Activated CD4-positive, alpha-beta T cell treated with anti-CD3 and anti-CD28 coated beads, Interleukin-2, amount 10 ng/mL, durations not matched to agents 24 days and 14 days (primary cell): ENCODE measurements at regions of chr17 and their contacts with region 1.

Region 1: GRCh38 chr17:67139784-67140657 is 95.7 kb downstream of the CACNG1 start:
- DNase-seq: no peak
- H3K4me3 Mint-ChIP-seq: no peak overlapping the region
- H3K27ac Mint-ChIP-seq: peak overlapping the region; percentile 35
- H3K4me1 Mint-ChIP-seq: peaks cover 31% of the 10 kb centered on the region
- H3K27me3 Mint-ChIP-seq: no peaks in the 10 kb centered on the region

Region 2: GRCh38 chr17:67245073-67245755 is 105.2 kb after region 1 on chr17 and contains the start of gene HELZ:
- intact Hi-C with region 1: loop called (anchors 10 kb)
- DNase-seq: peak; percentile 94
- H3K4me3 Mint-ChIP-seq: peak within 1 kb of the TSS; percentile 93
- H3K27ac Mint-ChIP-seq: peak within 1 kb of the TSS; percentile 94
- H3K4me1 Mint-ChIP-seq: peaks cover 38% of the 10 kb centered on the region
- H3K27me3 Mint-ChIP-seq: no peaks in the 10 kb centered on the region
- total RNA-seq, gene HELZ: 73.5 and 74.7 TPM in 2 replicates